CD4-positive, alpha-beta T cell (primary cell): ENCODE measurements at regions of chr21 and their contacts with region 1.

Region 1: GRCh38 chr21:15659753-15660422 is 69.9 kb upstream of the USP25 start:
- DNase-seq: no peak
- ATAC-seq: no peak
- H3K4me3 ChIP-seq: no peak overlapping the region
- H3K4me3 Mint-ChIP-seq: no peak overlapping the region
- H3K27ac ChIP-seq: no peak overlapping the region
- H3K27ac Mint-ChIP-seq: no peak overlapping the region
- H3K4me1 ChIP-seq: no peaks in the 10 kb centered on the region
- H3K4me1 Mint-ChIP-seq: no peaks in the 10 kb centered on the region
- H3K27me3 ChIP-seq: no peaks in the 10 kb centered on the region
- H3K27me3 Mint-ChIP-seq: peaks cover 7% of the 10 kb centered on the region
- CTCF ChIP-seq: no peak

Region 2: GRCh38 chr21:15754640-15755039 is 94.8 kb after region 1 on chr21:
- CTCF ChIA-PET with region 1: no interaction called
- POLR2A ChIA-PET with region 1: no interaction called
- intact Hi-C with region 1: no loop called
- DNase-seq: no peak
- ATAC-seq: no peak
- H3K4me3 ChIP-seq: no peak overlapping the region
- H3K4me3 Mint-ChIP-seq: no peak overlapping the region
- H3K27ac ChIP-seq: no peak overlapping the region
- H3K27ac Mint-ChIP-seq: no peak overlapping the region
- H3K4me1 ChIP-seq: peaks cover 26% of the 10 kb centered on the region
- H3K4me1 Mint-ChIP-seq: peaks cover 87% of the 10 kb centered on the region
- H3K27me3 ChIP-seq: no peaks in the 10 kb centered on the region
- H3K27me3 Mint-ChIP-seq: no peaks in the 10 kb centered on the region
- CTCF ChIP-seq: no peak

Region 3: DNA sequence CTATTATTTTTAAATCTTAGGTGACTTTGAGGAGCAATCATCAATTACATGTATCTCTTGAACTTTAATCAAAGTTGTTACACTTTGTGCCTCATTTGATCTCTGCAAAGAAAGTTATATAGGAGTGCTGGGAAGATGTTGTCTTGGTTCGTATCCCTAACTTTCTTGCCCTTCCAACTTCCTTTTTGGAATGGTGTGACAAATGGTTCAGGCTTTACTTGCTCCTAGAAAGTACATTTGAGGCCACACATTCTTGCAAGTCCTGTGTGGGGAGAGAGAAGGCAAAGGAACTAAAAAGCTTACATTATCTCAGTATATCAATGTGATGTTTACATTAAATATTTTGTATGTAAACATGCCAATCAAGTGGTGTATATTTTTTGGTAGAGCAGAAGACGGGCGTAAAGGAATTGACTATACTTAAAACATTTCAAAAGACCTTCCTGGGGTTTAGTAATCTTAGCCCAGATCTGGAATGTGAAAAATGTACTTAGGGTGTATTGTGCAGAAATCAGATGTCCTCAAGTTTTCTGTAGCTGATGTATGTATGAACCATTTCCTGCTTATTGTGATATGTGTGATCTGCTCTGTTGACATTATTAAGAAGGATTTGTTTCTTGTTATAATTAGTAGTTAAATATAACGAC is 129.1 kb after region 1 on chr21:
- CTCF ChIA-PET with region 1: no interaction called
- POLR2A ChIA-PET with region 1: no interaction called
- intact Hi-C with region 1: no loop called
- DNase-seq: no peak
- ATAC-seq: no peak
- H3K4me3 ChIP-seq: no peak overlapping the region
- H3K4me3 Mint-ChIP-seq: no peak overlapping the region
- H3K27ac ChIP-seq: no peak overlapping the region
- H3K27ac Mint-ChIP-seq: peak overlapping the region; percentile 25
- H3K4me1 ChIP-seq: peaks cover 4% of the 10 kb centered on the region
- H3K4me1 Mint-ChIP-seq: peaks cover 63% of the 10 kb centered on the region
- H3K27me3 ChIP-seq: no peaks in the 10 kb centered on the region
- H3K27me3 Mint-ChIP-seq: no peaks in the 10 kb centered on the region
- CTCF ChIP-seq: no peak

Region 4: DNA sequence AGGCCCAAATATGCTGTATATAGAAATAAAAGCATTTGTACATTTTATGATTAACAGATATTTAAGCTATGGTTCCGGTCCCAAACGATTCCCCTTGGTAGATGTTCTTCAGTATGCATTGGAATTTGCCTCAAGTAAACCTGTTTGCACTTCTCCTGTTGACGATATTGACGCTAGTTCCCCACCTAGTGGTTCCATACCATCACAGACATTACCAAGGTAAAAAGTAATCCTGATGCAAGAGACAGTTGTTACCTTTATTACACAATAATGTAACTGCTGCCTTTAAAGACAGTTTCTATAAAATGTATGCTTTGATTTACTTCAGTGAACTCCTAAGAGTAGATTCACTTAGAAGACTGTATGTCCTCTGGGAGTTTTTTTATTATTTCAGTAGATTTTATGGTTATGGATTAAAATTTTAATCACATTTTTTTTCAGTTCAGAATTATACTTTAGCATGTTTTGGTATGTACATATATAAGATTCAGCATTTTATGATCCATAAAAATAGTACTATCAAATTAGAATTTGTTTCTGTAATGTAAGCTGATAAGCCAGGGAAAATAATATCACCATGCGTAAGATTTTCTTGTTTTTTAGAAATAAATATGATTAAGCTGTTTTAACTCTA is 166.4 kb after region 1 on chr21:
- CTCF ChIA-PET with region 1: no interaction called
- POLR2A ChIA-PET with region 1: no interaction called
- intact Hi-C with region 1: loop called in 1 of 2 experiments (anchors 10 kb)
- DNase-seq: peak in 6 of 14 experiments; percentile 9 to 74 (median 58)
- ATAC-seq: peak; percentile 65
- H3K4me3 ChIP-seq: no peak overlapping the region
- H3K4me3 Mint-ChIP-seq: peak overlapping the region; percentile 12
- H3K27ac ChIP-seq: no peak overlapping the region
- H3K27ac Mint-ChIP-seq: peak overlapping the region; percentile 33
- H3K4me1 ChIP-seq: peaks cover 7% of the 10 kb centered on the region
- H3K4me1 Mint-ChIP-seq: peaks cover 42% of the 10 kb centered on the region
- H3K27me3 ChIP-seq: no peaks in the 10 kb centered on the region
- H3K27me3 Mint-ChIP-seq: no peaks in the 10 kb centered on the region
- CTCF ChIP-seq: peak; percentile 82